ENCODE measurements at regions of chr13 and their contacts with region 1.

Region 1: DNA sequence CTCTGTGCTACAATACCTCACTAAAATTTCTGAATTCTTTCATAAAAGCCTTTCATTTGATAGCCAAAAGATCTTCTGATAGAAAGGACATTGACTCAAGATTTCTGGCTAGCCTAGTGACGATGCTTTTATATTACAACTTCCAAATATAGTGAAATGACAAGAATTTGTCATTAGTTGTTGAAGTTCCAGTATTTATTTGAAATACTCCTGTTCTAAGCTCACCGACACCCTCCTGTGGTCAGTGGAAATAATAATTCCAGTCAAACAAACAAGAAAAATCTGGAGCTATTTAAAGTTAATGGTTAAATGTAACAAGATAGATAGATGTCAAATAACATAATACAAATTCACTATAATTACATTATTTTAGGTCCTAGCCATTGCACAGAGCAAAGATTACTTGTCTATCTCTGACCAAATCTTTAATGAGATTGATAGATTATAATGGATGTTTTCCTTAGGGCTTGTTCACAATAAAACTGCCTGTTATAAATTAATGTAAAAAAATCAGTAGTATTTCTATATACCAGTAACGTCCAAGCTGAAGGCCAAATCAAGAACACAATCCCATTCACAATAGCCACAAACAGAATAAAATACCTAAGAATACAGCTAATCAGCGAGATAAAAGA is 195.5 kb downstream of the RGCC start:
- DNase-seq: peak; percentile 33
- H3K4me3 Mint-ChIP-seq: no peak overlapping the region
- H3K27ac Mint-ChIP-seq: no peak overlapping the region
- H3K4me1 Mint-ChIP-seq: peaks cover 16% of the 10 kb centered on the region
- H3K27me3 Mint-ChIP-seq: no peaks in the 10 kb centered on the region

Region 2: GRCh38 chr13:41284512-41285288 is 368.1 kb before region 1 on chr13:
- CTCF ChIA-PET with region 1: no interaction called
- POLR2A ChIA-PET with region 1: no interaction called
- intact Hi-C with region 1: no loop called
- DNase-seq: no peak
- H3K4me3 Mint-ChIP-seq: no peak overlapping the region
- H3K27ac Mint-ChIP-seq: no peak overlapping the region
- H3K4me1 Mint-ChIP-seq: peaks cover 15% of the 10 kb centered on the region
- H3K27me3 Mint-ChIP-seq: no peaks in the 10 kb centered on the region

Region 3: DNA sequence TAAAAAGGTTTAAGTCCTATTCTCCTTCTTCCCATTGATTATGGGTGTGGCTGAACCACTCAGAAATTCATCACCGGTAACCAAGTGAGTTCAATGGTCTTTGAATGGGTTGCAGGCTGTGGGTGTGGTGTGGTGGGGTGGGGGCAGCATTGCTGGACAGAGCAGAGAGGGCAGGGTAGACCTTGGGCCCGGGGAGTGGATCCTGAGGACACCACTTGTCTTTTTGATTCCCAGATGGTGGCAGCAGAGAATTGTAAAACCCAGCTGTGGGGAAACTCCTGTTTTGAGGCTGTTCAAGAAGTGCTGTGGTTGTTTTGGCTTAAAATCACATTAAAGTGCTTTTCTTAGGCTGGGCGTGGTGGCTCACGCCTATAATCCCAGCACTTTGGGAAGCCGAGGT is 241.3 kb before region 1 on chr13:
- CTCF ChIA-PET with region 1: interaction called, 10 read pairs
- POLR2A ChIA-PET with region 1: no interaction called
- intact Hi-C with region 1: loop called (anchors 5 kb)
- DNase-seq: peak; percentile 36
- H3K4me3 Mint-ChIP-seq: no peak overlapping the region
- H3K27ac Mint-ChIP-seq: no peak overlapping the region
- H3K4me1 Mint-ChIP-seq: no peaks in the 10 kb centered on the region
- H3K27me3 Mint-ChIP-seq: no peaks in the 10 kb centered on the region

Region 4: GRCh38 chr13:41668130-41668757 is 15.4 kb after region 1 on chr13:
- CTCF ChIA-PET with region 1: interaction called, 11 read pairs
- POLR2A ChIA-PET with region 1: no interaction called
- intact Hi-C with region 1: no loop called
- DNase-seq: peak; percentile 30
- H3K4me3 Mint-ChIP-seq: no peak overlapping the region
- H3K27ac Mint-ChIP-seq: no peak overlapping the region
- H3K4me1 Mint-ChIP-seq: no peaks in the 10 kb centered on the region
- H3K27me3 Mint-ChIP-seq: no peaks in the 10 kb centered on the region

Region 5: DNA sequence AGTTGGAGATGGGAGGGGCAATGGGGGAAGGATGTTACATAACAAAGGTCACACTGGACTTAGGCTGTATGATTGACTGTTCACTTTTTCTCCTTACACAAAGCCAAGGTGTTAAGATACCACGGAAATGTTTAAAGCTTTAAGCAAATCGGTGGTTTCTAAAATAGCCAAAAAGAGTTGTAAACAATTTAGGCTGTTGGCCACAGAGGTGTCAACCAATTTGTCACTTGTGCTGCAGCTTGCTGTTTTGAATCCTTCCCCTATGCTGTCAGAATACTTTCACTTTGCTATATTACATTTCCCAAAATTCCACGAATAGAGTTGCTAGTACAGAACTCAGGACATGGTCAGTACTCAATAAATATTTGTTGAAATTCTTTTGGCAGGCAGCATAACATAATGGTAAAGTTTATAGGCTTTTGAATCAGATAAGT is 158.8 kb after region 1 on chr13:
- CTCF ChIA-PET with region 1: no interaction called
- POLR2A ChIA-PET with region 1: no interaction called
- intact Hi-C with region 1: no loop called
- DNase-seq: no peak
- H3K4me3 Mint-ChIP-seq: no peak overlapping the region
- H3K27ac Mint-ChIP-seq: no peak overlapping the region
- H3K4me1 Mint-ChIP-seq: peaks cover 11% of the 10 kb centered on the region
- H3K27me3 Mint-ChIP-seq: no peaks in the 10 kb centered on the region